Activated T-helper 1 cell treated with anti-CD3 and anti-CD28 coated beads, Interleukin-12 subunit alpha, Interleukin-12 subunit beta, Interleukin-2, Interleukin-4 antibody, amounts not matched to agents 30 ng/mL and 10 ng/mL and 1 ng/mL, durations not matched to agents 14 hours and 24 hours and 36 hours (primary cell): ENCODE measurements at regions of chr6 and their contacts with region 1.

Region 1: DNA sequence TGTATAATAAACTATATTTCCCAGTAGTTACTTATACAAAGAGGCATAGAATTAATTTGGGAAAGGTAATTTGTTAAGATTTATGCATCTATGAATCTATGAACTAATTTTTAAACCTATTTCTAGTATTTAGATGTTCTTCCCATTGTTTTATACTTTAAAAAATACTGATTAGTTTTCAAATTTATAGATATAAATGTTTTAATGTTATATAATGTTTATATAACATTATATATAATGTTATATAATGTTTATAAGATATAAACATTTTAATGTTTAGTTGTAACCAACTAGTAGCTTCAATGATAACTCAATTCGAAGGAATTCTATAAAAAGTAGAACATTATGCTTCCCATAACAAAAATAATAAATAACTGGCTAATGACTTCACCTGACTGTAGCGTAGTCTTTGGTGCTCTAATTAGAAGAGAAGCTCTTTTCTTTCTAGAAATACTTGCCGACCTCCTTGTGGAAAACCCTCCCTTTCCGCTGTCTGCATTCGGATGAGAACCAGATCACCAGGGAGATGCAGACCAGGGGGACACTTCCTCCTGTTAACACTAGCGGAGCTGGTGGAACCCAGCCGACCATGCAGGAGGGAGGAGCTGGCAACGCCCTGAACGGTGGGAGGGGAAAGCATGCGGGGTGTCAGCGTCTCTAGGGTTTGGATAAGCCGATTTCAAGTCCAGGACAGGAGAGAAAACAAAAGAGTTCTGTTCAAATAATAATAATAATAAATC is 158.4 kb downstream of the OR2B2 start:
- DNase-seq: peak; percentile 65
- H3K4me3 Mint-ChIP-seq: peak overlapping the region; percentile 83
- H3K27ac Mint-ChIP-seq: peak overlapping the region; percentile 69
- H3K4me1 Mint-ChIP-seq: peaks cover 56% of the 10 kb centered on the region
- H3K27me3 Mint-ChIP-seq: peaks cover 2% of the 10 kb centered on the region

Region 2: GRCh38 chr6:26065952-26066380 is 1687.9 kb before region 1 on chr6:
- intact Hi-C with region 1: no loop called
- DNase-seq: peak; percentile 50
- H3K4me3 Mint-ChIP-seq: no peak overlapping the region
- H3K27ac Mint-ChIP-seq: no peak overlapping the region
- H3K4me1 Mint-ChIP-seq: peaks cover 17% of the 10 kb centered on the region
- H3K27me3 Mint-ChIP-seq: peaks cover 7% of the 10 kb centered on the region

Region 3: GRCh38 chr6:26568601-26569432 is 1185.0 kb before region 1 on chr6:
- intact Hi-C with region 1: loop called (anchors 5 kb)
- DNase-seq: peak; percentile 94
- H3K4me3 Mint-ChIP-seq: peak overlapping the region; percentile 93
- H3K27ac Mint-ChIP-seq: peak overlapping the region; percentile 98
- H3K4me1 Mint-ChIP-seq: peaks cover 47% of the 10 kb centered on the region
- H3K27me3 Mint-ChIP-seq: peaks cover 5% of the 10 kb centered on the region

Region 4: GRCh38 chr6:27177485-27178406 is 576.1 kb before region 1 on chr6:
- intact Hi-C with region 1: loop called (anchors 1 kb)
- DNase-seq: peak; percentile 66
- H3K4me3 Mint-ChIP-seq: peak overlapping the region; percentile 95
- H3K27ac Mint-ChIP-seq: peak overlapping the region; percentile 93
- H3K4me1 Mint-ChIP-seq: peaks cover 7% of the 10 kb centered on the region
- H3K27me3 Mint-ChIP-seq: peaks cover 36% of the 10 kb centered on the region

Region 5: GRCh38 chr6:27237089-27237803 is 516.6 kb before region 1 on chr6:
- intact Hi-C with region 1: no loop called
- DNase-seq: no peak
- H3K4me3 Mint-ChIP-seq: peak overlapping the region; percentile 71
- H3K27ac Mint-ChIP-seq: peak overlapping the region; percentile 25
- H3K4me1 Mint-ChIP-seq: peaks cover 23% of the 10 kb centered on the region
- H3K27me3 Mint-ChIP-seq: peaks cover 46% of the 10 kb centered on the region

Region 6: GRCh38 chr6:27479319-27480182 is 274.3 kb before region 1 on chr6:
- intact Hi-C with region 1: loop called (anchors 1 kb)
- DNase-seq: peak; percentile 81
- H3K4me3 Mint-ChIP-seq: no peak overlapping the region
- H3K27ac Mint-ChIP-seq: no peak overlapping the region
- H3K4me1 Mint-ChIP-seq: no peaks in the 10 kb centered on the region
- H3K27me3 Mint-ChIP-seq: peaks cover 10% of the 10 kb centered on the region

Region 7: DNA sequence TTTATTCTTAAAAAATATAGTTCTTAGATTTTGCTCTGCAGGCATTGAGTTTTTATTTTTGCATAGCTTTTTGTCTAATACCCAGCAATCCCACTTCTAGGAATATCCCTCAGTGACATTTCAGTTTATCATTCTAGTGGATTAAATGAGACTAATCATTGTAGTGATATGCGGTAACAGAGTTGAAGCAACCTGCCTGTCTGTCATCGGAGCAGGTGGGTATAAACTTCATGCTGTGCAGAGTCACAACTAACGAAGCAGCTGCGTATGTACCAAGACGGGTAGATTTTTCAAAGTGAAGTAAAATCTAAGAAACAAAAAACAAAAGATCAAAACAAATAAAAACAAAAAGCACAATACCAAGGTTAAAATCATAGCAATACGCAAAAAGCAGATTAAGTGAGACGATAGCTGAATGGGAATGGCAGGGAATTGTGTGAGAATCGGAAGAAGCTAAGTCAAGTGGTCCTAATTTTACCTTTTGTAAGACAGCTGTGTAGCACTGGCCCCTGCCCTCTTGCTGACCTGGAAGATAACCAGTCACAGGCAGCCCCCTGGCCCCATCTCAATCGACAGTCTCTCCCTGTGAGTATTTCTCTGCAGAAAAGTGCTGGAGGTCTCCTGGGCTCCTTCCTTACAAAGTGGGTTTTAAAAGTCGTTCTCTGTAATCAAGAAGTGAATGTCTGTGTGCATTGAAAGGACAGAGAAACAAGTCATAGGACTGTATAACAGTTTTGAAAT is 10.8 kb before region 1 on chr6:
- intact Hi-C with region 1: loop called (anchors 1 kb)
- DNase-seq: no peak
- H3K4me3 Mint-ChIP-seq: no peak overlapping the region
- H3K27ac Mint-ChIP-seq: no peak overlapping the region
- H3K4me1 Mint-ChIP-seq: peaks cover 20% of the 10 kb centered on the region
- H3K27me3 Mint-ChIP-seq: peaks cover 33% of the 10 kb centered on the region

Region 8: GRCh38 chr6:27864906-27865849 is 111.3 kb after region 1 on chr6:
- intact Hi-C with region 1: loop called (anchors 1 kb)
- DNase-seq: peak; percentile 80
- H3K4me3 Mint-ChIP-seq: peak overlapping the region; percentile 99
- H3K27ac Mint-ChIP-seq: peak overlapping the region; percentile 99
- H3K4me1 Mint-ChIP-seq: peaks cover 71% of the 10 kb centered on the region
- H3K27me3 Mint-ChIP-seq: peaks cover 4% of the 10 kb centered on the region